ENCODE measurements at regions of chr12 and their contacts with region 1.

Region 1: GRCh38 chr12:8078398-8078797 is 3.7 kb upstream of the NECAP1 start:
- DNase-seq: peak; percentile 70
- H3K4me3 Mint-ChIP-seq: no peak overlapping the region
- H3K27ac Mint-ChIP-seq: no peak overlapping the region
- H3K4me1 Mint-ChIP-seq: peaks cover 38% of the 10 kb centered on the region
- H3K27me3 Mint-ChIP-seq: peaks cover 1% of the 10 kb centered on the region

Region 2: GRCh38 chr12:8038659-8039114 is 39.7 kb before region 1 on chr12:
- CTCF ChIA-PET with region 1: interaction called, 136 read pairs
- DNase-seq: peak; percentile 63
- H3K4me3 Mint-ChIP-seq: peak overlapping the region; percentile 35
- H3K27ac Mint-ChIP-seq: no peak overlapping the region
- H3K4me1 Mint-ChIP-seq: peaks cover 54% of the 10 kb centered on the region
- H3K27me3 Mint-ChIP-seq: no peaks in the 10 kb centered on the region

Region 3: GRCh38 chr12:8045952-8046944 is 32.1 kb before region 1 on chr12:
- CTCF ChIA-PET with region 1: interaction called, 136 read pairs
- DNase-seq: peak; percentile 89
- H3K4me3 Mint-ChIP-seq: no peak overlapping the region
- H3K27ac Mint-ChIP-seq: no peak overlapping the region
- H3K4me1 Mint-ChIP-seq: peaks cover 9% of the 10 kb centered on the region
- H3K27me3 Mint-ChIP-seq: no peaks in the 10 kb centered on the region

Region 4: DNA sequence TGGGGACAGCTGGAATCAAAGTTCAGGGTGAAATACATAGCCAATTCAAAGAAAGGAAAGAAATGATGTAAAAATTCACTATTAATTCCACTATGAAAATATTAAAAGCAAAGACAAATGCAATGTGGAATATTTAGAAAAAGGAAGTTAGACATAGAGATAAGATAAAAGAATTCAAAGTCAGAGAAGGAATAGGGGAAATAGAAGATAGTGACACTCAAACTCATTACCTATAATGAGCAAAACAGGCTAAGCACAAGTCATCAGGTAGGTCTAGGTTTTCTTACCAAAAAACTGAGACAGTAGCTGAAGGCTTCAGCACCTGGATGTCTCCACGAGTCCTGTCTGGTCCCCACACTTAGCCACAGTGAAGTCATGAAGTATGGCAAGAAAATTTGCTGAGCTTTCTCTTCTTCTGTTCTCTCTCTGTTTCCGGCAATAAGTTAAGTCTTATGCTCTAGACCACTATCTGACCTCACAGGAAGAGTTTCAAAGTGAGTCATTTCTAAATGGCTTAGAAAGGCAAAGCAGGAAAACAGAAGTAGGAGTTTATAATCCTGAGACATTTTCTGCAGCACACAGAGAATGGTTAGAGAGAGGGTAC is 12.3 kb before region 1 on chr12 and contains the start of gene C3AR1:
- CTCF ChIA-PET with region 1: interaction called, 17 read pairs
- DNase-seq: peak; percentile 62
- H3K4me3 Mint-ChIP-seq: peak within 1 kb of the TSS; percentile 56
- H3K27ac Mint-ChIP-seq: peak within 1 kb of the TSS; percentile 86
- H3K4me1 Mint-ChIP-seq: peaks cover 23% of the 10 kb centered on the region
- H3K27me3 Mint-ChIP-seq: no peaks in the 10 kb centered on the region

Measured in activated naive CD4-positive, alpha-beta T cell treated with anti-CD3 and anti-CD28 coated beads, Interleukin-2, amount 10 ng/mL, durations not matched to agents 7 days and 5 days (primary cell).